ENCODE measurements at regions of chr16 and their contacts with region 1.

Region 1: DNA sequence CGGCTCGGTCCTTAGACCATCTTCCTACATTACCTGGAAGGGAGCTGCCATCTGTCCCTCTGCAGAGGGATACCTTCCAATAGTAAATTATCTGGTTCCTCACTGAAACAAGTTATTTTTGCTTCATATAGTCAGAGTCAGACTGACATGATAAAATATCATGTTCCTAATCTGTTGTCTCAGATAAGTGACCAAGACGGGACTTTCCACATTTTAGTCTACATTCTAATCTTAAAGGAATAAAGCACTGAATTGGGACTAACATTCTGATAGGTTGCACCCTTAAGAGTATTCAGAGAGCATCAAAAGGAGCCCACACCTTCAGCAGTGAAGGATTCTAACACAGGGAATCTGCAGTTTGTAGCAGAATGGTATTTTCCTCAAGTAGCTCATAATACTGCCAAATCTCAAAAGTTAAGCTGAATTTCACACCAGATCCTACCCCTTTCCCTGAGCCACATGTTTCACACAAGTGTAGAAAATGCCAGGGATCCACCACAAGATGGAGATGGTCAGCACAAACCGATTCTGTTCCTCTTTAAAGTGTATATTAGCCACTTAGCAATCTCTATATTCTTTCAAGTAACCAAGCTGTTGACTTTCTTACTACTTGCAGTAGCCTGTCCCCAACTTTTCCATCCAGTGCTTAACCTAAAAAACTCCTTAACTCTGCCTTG is 13.4 kb downstream of the GINS2 start:
- DNase-seq: peak; percentile 36 to 45
- ATAC-seq: peak; percentile 73 to 76; a peak in 4 of 6 replicates
- H3K4me3 ChIP-seq: no peak overlapping the region
- H3K27ac ChIP-seq: no peak overlapping the region
- H3K4me1 ChIP-seq: no peaks in the 10 kb centered on the region
- CTCF ChIP-seq: peak; percentile 53
- EP300 ChIP-seq: no peak
- POLR2A ChIP-seq: no peak
- RAD21 ChIP-seq: peak in 1 of 2 experiments; percentile 29; a peak in 1 of 5 replicates

Region 2: GRCh38 chr16:85601730-85602401 is 73.5 kb before region 1 on chr16:
- CTCF ChIA-PET with region 1: no interaction called
- POLR2A ChIA-PET with region 1: no interaction called
- DNase-seq: no peak
- ATAC-seq: no peak; a peak in 1 of 6 replicates
- H3K4me3 ChIP-seq: no peak overlapping the region
- H3K27ac ChIP-seq: peak overlapping the region in 1 of 2 experiments; percentile 45; a peak in 2 of 6 replicates
- H3K4me1 ChIP-seq: 0 out of 3 replicates have a peak, but pooled peaks cover 5% of the 10 kb centered on the region
- CTCF ChIP-seq: no peak
- EP300 ChIP-seq: no peak
- POLR2A ChIP-seq: no peak
- RAD21 ChIP-seq: no peak

Region 3: GRCh38 chr16:85659805-85660495 is 15.4 kb before region 1 on chr16:
- CTCF ChIA-PET with region 1: interaction called, 96 read pairs
- POLR2A ChIA-PET with region 1: no interaction called
- DNase-seq: peak; percentile 58 to 88
- ATAC-seq: peak; percentile 76 to 87
- H3K4me3 ChIP-seq: no peak overlapping the region
- H3K27ac ChIP-seq: no peak overlapping the region
- H3K4me1 ChIP-seq: no peaks in the 10 kb centered on the region
- CTCF ChIP-seq: peak; percentile 72
- EP300 ChIP-seq: no peak
- POLR2A ChIP-seq: no peak
- RAD21 ChIP-seq: peak; percentile 43 to 61; a peak in 3 of 5 replicates

Region 4: GRCh38 chr16:85688586-85689284 is 13.3 kb after region 1 on chr16 and contains the start of gene GINS2:
- CTCF ChIA-PET with region 1: interaction called, 16 read pairs
- POLR2A ChIA-PET with region 1: no interaction called
- DNase-seq: peak; percentile 91 to 97
- ATAC-seq: peak; percentile 99
- H3K4me3 ChIP-seq: peak within 1 kb of the TSS; percentile 81
- H3K27ac ChIP-seq: peak within 1 kb of the TSS; percentile 63 to 84
- H3K4me1 ChIP-seq: peaks cover 9% of the 10 kb centered on the region; the same call in 1 of the 3 replicates
- CTCF ChIP-seq: no peak
- EP300 ChIP-seq: no peak
- POLR2A ChIP-seq: no peak
- RAD21 ChIP-seq: no peak
- polyA plus RNA-seq, gene GINS2: 23.4 and 28.7 TPM in 2 replicates

Region 5: GRCh38 chr16:85707528-85708321 is 32.3 kb after region 1 on chr16:
- CTCF ChIA-PET with region 1: interaction called, 10 read pairs
- POLR2A ChIA-PET with region 1: no interaction called
- DNase-seq: no peak
- ATAC-seq: no peak
- H3K4me3 ChIP-seq: no peak overlapping the region
- H3K27ac ChIP-seq: no peak overlapping the region
- H3K4me1 ChIP-seq: no peaks in the 10 kb centered on the region
- CTCF ChIP-seq: no peak
- EP300 ChIP-seq: no peak
- POLR2A ChIP-seq: no peak
- RAD21 ChIP-seq: no peak

Region 6: GRCh38 chr16:85759631-85760419 is 84.4 kb after region 1 on chr16:
- CTCF ChIA-PET with region 1: interaction called, 43 read pairs
- POLR2A ChIA-PET with region 1: no interaction called
- DNase-seq: peak; percentile 41 to 55
- ATAC-seq: peak; percentile 81 to 93; a peak in 5 of 6 replicates
- H3K4me3 ChIP-seq: no peak overlapping the region
- H3K27ac ChIP-seq: no peak overlapping the region
- H3K4me1 ChIP-seq: no peaks in the 10 kb centered on the region
- CTCF ChIP-seq: peak; percentile 49
- EP300 ChIP-seq: no peak
- POLR2A ChIP-seq: no peak
- RAD21 ChIP-seq: peak; percentile 58 to 70

Measured in A549 (cell line).